ENCODE measurements at regions of chr17 and their contacts with region 1.

Region 1: DNA sequence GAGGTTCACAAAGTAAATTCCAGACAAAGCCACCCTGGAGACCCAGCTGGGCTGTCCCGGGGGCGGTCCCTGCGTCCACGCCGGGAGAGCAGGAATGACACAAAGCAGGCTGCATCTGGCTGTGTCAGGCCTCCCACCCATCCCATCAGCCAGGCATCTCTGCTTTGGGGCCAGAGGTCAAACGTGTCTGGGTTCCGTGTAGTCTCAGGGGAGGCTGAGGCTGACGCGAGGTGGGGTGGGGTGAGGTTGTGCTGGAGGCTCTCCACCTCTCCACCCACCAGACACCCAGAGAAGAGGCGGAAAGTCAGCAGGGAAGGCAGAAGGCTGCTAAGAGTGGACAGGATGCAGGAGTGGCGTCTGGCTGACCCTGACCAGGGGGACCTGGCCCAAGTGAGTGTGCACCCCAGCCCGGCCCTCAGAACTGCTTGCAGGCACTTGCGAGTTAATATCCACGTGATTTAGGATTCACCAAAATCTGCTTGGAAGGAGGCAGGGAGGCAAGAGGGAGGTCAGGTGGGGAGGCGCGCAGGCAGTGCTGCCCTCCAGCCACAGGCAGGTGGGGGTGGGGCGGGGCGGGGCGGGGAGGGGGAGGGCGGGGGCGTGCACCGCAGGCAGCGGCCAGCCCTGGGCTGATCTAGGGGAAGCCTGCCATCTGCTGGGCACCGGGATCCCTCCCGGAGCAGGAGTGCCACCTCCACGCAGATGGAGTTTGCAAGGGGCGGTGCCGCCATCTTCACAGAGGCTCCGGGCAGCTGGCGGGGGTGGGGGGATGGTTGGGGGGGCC is 44.3 kb downstream of the TBC1D16 start:
- DNase-seq: peak; percentile 70 to 91 (median 86)
- ATAC-seq: peak; percentile 93
- H3K4me3 ChIP-seq: peak overlapping the region; percentile 69 to 71
- H3K4me3 Mint-ChIP-seq: peak overlapping the region; percentile 80
- H3K27ac ChIP-seq: peak overlapping the region in 1 of 2 experiments; percentile 30
- H3K27ac Mint-ChIP-seq: no peak overlapping the region
- H3K4me1 ChIP-seq: peaks cover 36% of the 10 kb centered on the region
- H3K4me1 Mint-ChIP-seq: peaks cover 41% of the 10 kb centered on the region
- H3K27me3 ChIP-seq: peaks cover 0 to 9% of the 10 kb centered on the region in 2 experiments
- H3K27me3 Mint-ChIP-seq: no peaks in the 10 kb centered on the region
- CTCF ChIP-seq: peak; percentile 61

Region 2: GRCh38 chr17:79684132-79684985 is 307.0 kb before region 1 on chr17:
- CTCF ChIA-PET with region 1: no interaction called
- POLR2A ChIA-PET with region 1: no interaction called
- intact Hi-C with region 1: no loop called
- DNase-seq: no peak
- ATAC-seq: no peak
- H3K4me3 ChIP-seq: no peak overlapping the region
- H3K4me3 Mint-ChIP-seq: no peak overlapping the region
- H3K27ac ChIP-seq: no peak overlapping the region
- H3K27ac Mint-ChIP-seq: no peak overlapping the region
- H3K4me1 ChIP-seq: no peaks in the 10 kb centered on the region
- H3K4me1 Mint-ChIP-seq: no peaks in the 10 kb centered on the region
- H3K27me3 ChIP-seq: peaks cover 2 to 5% of the 10 kb centered on the region in 2 experiments
- H3K27me3 Mint-ChIP-seq: peaks cover 31% of the 10 kb centered on the region
- CTCF ChIP-seq: no peak

Region 3: DNA sequence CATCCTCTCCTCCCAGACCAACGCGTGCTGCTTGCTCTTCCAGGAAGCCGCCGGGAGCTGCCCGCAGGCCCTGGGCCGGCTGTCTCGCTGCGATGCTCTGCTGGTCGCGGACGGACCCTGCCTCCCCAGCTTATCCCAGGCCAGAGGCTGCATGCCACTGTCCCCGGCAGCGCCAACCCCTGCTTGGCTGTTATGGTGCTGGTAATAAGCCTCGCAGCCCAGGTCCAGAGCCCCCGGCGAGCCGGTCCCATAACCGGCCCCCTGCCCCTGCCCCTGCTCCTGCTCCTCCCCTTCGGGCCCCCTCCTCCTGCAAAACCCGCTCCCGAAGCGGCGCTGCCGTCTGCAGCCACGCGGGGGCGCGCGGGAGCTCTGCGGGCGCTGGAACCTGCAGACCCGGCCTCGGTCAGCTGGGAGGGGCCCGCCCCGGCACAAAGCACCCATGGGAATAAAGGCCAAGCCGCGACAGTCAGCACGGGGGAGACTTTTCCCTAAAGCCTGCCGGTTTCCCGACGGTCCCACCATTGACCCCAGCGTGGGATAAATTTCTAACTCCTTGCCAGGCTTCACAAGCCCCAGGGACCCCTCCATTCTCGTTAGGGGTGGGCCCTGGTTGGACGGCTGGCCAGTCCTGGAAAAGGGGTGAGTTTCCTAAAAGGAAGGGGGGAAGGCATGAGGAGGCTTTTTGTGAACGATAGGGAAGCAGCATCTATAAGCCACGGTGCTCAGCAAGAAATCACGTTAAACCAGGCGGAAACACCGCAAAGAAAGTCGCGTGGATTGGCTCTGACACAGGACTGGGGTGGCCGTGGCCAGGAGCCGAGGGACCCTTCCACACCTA is 249.4 kb before region 1 on chr17:
- CTCF ChIA-PET with region 1: interaction called, 16 read pairs
- POLR2A ChIA-PET with region 1: no interaction called
- intact Hi-C with region 1: loop called (anchors 1 kb)
- DNase-seq: peak; percentile 54 to 83 (median 68)
- ATAC-seq: peak; percentile 58
- H3K4me3 ChIP-seq: no peak overlapping the region
- H3K4me3 Mint-ChIP-seq: no peak overlapping the region
- H3K27ac ChIP-seq: no peak overlapping the region
- H3K27ac Mint-ChIP-seq: no peak overlapping the region
- H3K4me1 ChIP-seq: peaks cover 23% of the 10 kb centered on the region
- H3K4me1 Mint-ChIP-seq: peaks cover 8% of the 10 kb centered on the region
- H3K27me3 ChIP-seq: peaks cover 4 to 22% of the 10 kb centered on the region in 2 experiments
- H3K27me3 Mint-ChIP-seq: peaks cover 31% of the 10 kb centered on the region
- CTCF ChIP-seq: peak; percentile 95

Region 4: DNA sequence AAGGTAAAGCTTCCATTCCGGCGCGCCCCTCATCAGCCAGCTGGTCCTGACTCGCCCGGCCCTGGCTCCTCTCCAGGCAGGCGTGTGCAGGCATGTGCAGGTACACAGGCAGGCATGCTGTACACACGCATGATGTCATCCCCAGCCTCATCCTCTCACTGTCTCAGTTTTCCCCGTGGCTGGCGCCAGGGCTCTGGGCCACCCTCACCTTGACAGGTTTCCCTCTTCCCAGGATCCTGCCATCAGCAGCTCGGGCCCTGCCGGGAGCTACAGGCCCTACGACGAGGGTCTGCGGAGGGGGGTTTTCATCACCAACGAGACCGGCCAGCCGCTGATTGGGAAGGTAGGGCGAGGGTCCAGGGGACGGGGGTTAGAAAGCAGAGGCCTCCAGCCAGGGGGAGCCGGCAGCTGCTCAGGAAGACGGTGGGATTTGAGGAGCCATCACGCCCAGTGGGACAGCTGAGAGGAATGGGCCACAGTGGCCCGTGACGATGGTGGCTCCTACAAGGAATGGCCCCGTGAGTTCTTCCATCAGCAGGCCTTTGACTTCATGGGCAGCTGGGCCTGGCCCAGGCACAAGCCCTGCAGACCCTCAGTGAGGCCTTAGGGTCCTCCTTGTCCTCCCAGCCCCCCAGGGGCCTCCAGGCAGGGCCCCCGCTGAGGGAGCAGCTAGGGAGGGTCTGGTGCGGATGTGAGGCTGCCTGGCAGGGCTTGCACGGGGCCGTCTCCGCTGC is 118.5 kb after region 1 on chr17:
- CTCF ChIA-PET with region 1: no interaction called
- POLR2A ChIA-PET with region 1: no interaction called
- intact Hi-C with region 1: no loop called
- DNase-seq: no peak
- ATAC-seq: no peak
- H3K4me3 ChIP-seq: no peak overlapping the region
- H3K4me3 Mint-ChIP-seq: no peak overlapping the region
- H3K27ac ChIP-seq: no peak overlapping the region
- H3K27ac Mint-ChIP-seq: no peak overlapping the region
- H3K4me1 ChIP-seq: no peaks in the 10 kb centered on the region
- H3K4me1 Mint-ChIP-seq: no peaks in the 10 kb centered on the region
- H3K27me3 ChIP-seq: no peaks in the 10 kb centered on the region
- H3K27me3 Mint-ChIP-seq: no peaks in the 10 kb centered on the region
- CTCF ChIP-seq: no peak

Measured in CD8-positive, alpha-beta T cell (primary cell).